ENCODE measurements at regions of chr6 and their contacts with region 1.

Region 1: GRCh38 chr6:149316798-149317655 is 485 bp upstream of the TAB2 start:
- DNase-seq: peak; percentile 91
- H3K4me3 Mint-ChIP-seq: peak overlapping the region; percentile 81
- H3K27ac Mint-ChIP-seq: peak overlapping the region; percentile 94
- H3K4me1 Mint-ChIP-seq: peaks cover 39% of the 10 kb centered on the region
- H3K27me3 Mint-ChIP-seq: no peaks in the 10 kb centered on the region

Region 2: GRCh38 chr6:149082286-149082707 is 234.7 kb before region 1 on chr6:
- CTCF ChIA-PET with region 1: interaction called, 8 read pairs
- intact Hi-C with region 1: loop called (anchors 1 kb)
- DNase-seq: peak; percentile 97
- H3K4me3 Mint-ChIP-seq: no peak overlapping the region
- H3K27ac Mint-ChIP-seq: peak overlapping the region; percentile 41
- H3K4me1 Mint-ChIP-seq: peaks cover 54% of the 10 kb centered on the region
- H3K27me3 Mint-ChIP-seq: no peaks in the 10 kb centered on the region

Region 3: DNA sequence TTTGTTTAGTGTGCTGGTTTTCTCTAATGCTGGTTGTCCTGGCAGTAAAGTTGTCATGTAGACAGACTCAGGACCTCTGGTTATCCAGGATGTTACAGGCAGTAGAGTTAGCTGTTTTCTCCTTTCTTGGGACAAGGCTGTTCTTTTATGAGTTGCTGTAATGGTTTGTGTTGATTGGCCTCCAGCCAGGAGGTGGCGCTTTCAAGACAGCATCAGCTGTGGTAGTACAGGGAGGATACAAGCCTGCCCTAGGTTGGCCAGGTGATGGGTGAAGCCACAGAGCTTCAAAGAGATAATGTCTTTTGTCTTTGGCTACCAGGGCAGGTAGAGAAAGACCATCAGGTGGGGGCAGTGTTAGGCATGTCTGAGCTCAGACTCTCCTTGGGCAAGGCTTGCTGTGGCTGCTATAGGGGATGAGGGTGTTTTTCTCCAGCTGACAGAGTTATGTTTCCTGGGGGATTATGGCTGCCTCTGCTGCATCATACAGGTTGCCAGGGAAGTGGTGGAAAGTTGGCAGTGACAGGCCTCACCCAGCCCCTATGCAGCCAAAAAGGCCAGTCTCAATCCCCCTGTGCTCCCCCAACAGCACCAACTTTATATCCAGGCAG is 126.7 kb before region 1 on chr6:
- CTCF ChIA-PET with region 1: interaction called, 3 read pairs
- intact Hi-C with region 1: loop called (anchors 2 kb)
- DNase-seq: peak; percentile 87
- H3K4me3 Mint-ChIP-seq: no peak overlapping the region
- H3K27ac Mint-ChIP-seq: no peak overlapping the region
- H3K4me1 Mint-ChIP-seq: peaks cover 19% of the 10 kb centered on the region
- H3K27me3 Mint-ChIP-seq: no peaks in the 10 kb centered on the region

Region 4: GRCh38 chr6:149277621-149278020 is 39.4 kb before region 1 on chr6:
- CTCF ChIA-PET with region 1: interaction called, 3 read pairs
- intact Hi-C with region 1: loop called (anchors 1 kb)
- DNase-seq: no peak
- H3K4me3 Mint-ChIP-seq: no peak overlapping the region
- H3K27ac Mint-ChIP-seq: no peak overlapping the region
- H3K4me1 Mint-ChIP-seq: peaks cover 29% of the 10 kb centered on the region
- H3K27me3 Mint-ChIP-seq: no peaks in the 10 kb centered on the region

Region 5: GRCh38 chr6:149366267-149366921 is 49.4 kb after region 1 on chr6:
- CTCF ChIA-PET with region 1: no interaction called
- intact Hi-C with region 1: loop called (anchors 1 kb)
- DNase-seq: no peak
- H3K4me3 Mint-ChIP-seq: no peak overlapping the region
- H3K27ac Mint-ChIP-seq: no peak overlapping the region
- H3K4me1 Mint-ChIP-seq: peaks cover 49% of the 10 kb centered on the region
- H3K27me3 Mint-ChIP-seq: no peaks in the 10 kb centered on the region

Region 6: DNA sequence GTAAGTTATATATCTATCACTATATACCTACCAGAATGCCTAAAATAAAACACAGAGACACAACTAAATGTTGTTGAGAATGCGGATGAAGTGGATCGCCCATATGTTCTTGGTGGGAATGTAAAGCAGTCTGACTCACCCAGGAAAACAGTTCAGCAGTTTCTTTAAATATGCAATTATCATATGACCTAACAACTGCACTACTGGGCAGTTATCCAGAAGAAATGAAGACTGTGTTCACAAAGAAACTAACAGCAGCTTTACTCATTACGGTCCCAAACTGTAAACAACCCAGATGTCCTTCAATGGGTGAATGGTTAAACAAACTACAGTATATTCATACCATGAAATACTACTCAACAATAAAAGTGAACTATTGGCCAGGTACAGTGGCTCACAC is 182.0 kb after region 1 on chr6:
- CTCF ChIA-PET with region 1: no interaction called
- intact Hi-C with region 1: loop called (anchors 1 kb)
- DNase-seq: no peak
- H3K4me3 Mint-ChIP-seq: no peak overlapping the region
- H3K27ac Mint-ChIP-seq: peak overlapping the region; percentile 87
- H3K4me1 Mint-ChIP-seq: peaks cover 81% of the 10 kb centered on the region
- H3K27me3 Mint-ChIP-seq: no peaks in the 10 kb centered on the region

Region 7: GRCh38 chr6:150001295-150002008 is 684.4 kb after region 1 on chr6:
- CTCF ChIA-PET with region 1: no interaction called
- intact Hi-C with region 1: no loop called
- DNase-seq: peak; percentile 62
- H3K4me3 Mint-ChIP-seq: no peak overlapping the region
- H3K27ac Mint-ChIP-seq: peak overlapping the region; percentile 2
- H3K4me1 Mint-ChIP-seq: peaks cover 41% of the 10 kb centered on the region
- H3K27me3 Mint-ChIP-seq: peaks cover 33% of the 10 kb centered on the region

Measured in activated naive CD4-positive, alpha-beta T cell treated with anti-CD3 and anti-CD28 coated beads for 36 hours (primary cell).